ENCODE measurements at regions of chr18 and their contacts with region 1.

Region 1: DNA sequence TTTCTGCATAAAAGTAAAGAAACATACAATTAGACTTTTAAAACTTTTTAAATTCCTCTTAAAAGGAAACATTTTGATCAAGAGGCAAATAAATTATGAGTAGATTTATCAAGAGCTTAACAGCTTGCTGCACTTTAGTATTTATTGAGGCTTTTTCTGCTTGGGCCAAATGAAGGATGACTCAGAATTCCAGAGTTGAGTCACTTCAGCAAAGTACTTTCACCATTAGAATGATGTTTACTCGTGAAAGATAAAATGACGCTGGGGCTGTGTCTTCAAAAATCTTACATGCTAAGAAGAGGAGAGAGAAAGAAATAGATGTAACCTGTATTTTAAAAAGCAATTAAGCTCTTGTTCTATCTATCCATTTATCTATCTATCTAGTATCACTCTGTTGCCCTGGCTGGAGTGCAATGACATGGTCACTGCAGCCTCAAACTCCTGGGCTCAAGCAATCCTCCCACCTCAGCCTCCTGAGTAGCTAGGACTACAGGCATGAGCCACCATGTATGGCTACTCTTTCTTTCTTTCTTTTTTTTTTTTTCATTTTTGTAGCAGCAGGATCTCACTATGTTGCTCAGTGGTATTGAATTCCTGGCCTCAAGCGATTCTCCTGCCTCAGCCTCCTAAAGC is 75.3 kb upstream of the RIOK3 start:
- DNase-seq: peak; percentile 90
- H3K4me3 ChIP-seq: no peak overlapping the region
- H3K27ac ChIP-seq: peak overlapping the region; percentile 78
- H3K4me1 ChIP-seq: peaks cover 36% of the 10 kb centered on the region
- H3K27me3 ChIP-seq: no peaks in the 10 kb centered on the region
- CTCF ChIP-seq: no peak
- POLR2A ChIP-seq: no peak

Region 2: GRCh38 chr18:23032030-23032582 is 345.7 kb before region 1 on chr18:
- CTCF ChIA-PET with region 1: interaction called, 35 read pairs
- POLR2A ChIA-PET with region 1: no interaction called
- dilution Hi-C with region 1: no loop called
- intact Hi-C with region 1: loop called (anchors 1 kb)
- DNase-seq: peak; percentile 45
- H3K4me3 ChIP-seq: no peak overlapping the region
- H3K27ac ChIP-seq: peak overlapping the region; percentile 20
- H3K4me1 ChIP-seq: peaks cover 10% of the 10 kb centered on the region
- H3K27me3 ChIP-seq: no peaks in the 10 kb centered on the region
- CTCF ChIP-seq: no peak
- POLR2A ChIP-seq: no peak

Region 3: GRCh38 chr18:23077493-23078256 is 300.1 kb before region 1 on chr18:
- CTCF ChIA-PET with region 1: interaction called, 19 read pairs
- POLR2A ChIA-PET with region 1: no interaction called
- dilution Hi-C with region 1: no loop called
- intact Hi-C with region 1: loop called (anchors 2 kb)
- DNase-seq: peak; percentile 24
- H3K4me3 ChIP-seq: no peak overlapping the region
- H3K27ac ChIP-seq: no peak overlapping the region
- H3K4me1 ChIP-seq: peaks cover 4% of the 10 kb centered on the region
- H3K27me3 ChIP-seq: peaks cover 0 to 2% of the 10 kb centered on the region in 2 experiments
- CTCF ChIP-seq: peak; percentile 20 to 28
- POLR2A ChIP-seq: no peak

Region 4: DNA sequence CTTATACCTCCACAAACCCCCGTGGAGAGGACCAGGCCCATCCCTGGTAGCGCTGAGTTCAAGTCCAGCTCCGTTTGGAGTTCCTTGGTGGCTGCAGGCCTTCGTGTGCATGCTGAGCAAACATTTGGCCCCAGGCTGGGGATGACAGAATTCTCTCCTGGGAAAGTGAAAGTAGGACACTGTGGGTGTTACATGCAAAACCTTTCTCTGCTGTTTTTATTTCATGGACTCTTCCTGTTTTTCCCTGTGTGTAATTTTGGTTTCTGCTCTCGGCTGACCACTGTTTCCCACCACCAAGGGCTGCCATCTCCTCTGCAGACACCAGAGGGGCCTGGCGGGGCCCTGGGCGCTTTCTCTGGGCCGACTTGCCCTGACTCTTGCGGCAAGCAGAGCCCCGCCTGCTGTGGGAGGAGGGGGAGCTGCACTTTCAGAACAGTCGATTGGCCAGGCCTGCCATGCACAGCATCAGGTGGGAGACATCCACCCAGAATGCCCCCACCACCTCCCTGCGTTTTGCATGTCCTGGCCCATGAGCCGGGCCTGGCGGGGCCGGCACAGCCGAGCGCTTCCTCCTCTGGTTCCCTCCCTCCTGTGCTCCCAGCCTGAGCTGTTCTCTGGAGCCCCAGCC is 140.1 kb before region 1 on chr18:
- CTCF ChIA-PET with region 1: interaction called, 25 read pairs
- POLR2A ChIA-PET with region 1: no interaction called
- dilution Hi-C with region 1: no loop called
- intact Hi-C with region 1: loop called (anchors 1 kb)
- DNase-seq: peak; percentile 84
- H3K4me3 ChIP-seq: no peak overlapping the region
- H3K27ac ChIP-seq: peak overlapping the region; percentile 83
- H3K4me1 ChIP-seq: peaks cover 21% of the 10 kb centered on the region
- H3K27me3 ChIP-seq: no peaks in the 10 kb centered on the region
- CTCF ChIP-seq: peak; percentile 51 to 66
- POLR2A ChIP-seq: no peak

Region 5: DNA sequence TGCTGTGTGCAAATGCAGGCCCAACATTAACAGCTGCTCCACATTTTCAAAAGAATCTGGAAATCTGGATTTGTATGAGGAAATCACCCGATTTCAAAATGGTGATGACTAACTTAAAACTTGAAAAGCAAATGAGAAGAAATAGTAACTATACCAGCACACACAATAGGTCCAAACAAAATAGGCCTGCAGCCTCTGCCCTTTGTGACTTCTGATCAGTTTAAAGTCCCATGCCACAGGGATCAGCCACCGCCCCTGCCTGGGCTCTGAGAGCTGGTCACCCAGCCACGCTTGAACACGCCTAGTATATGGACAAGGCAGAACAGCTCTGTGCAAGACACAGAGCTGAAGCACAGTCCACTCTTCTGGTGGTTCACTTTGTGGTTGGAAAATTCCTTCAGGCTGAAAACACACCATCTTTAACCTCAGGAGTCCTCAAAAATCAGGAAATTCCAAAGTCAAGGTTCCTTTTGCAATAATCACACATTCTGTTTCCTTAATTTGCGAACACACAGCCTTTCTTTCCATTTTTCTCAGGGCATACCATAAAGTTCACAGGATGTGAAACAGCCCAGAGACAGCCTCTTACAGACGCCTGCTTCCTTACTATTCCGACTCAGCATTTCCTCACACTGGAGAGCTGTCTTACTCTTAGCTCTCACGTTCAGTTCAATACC is 74.8 kb before region 1 on chr18:
- CTCF ChIA-PET with region 1: interaction called, 8 read pairs
- POLR2A ChIA-PET with region 1: no interaction called
- dilution Hi-C with region 1: no loop called
- intact Hi-C with region 1: loop called (anchors 1 kb)
- DNase-seq: peak; percentile 98
- H3K4me3 ChIP-seq: no peak overlapping the region
- H3K27ac ChIP-seq: peak overlapping the region; percentile 88
- H3K4me1 ChIP-seq: peaks cover 44% of the 10 kb centered on the region
- H3K27me3 ChIP-seq: no peaks in the 10 kb centered on the region
- CTCF ChIP-seq: no peak
- POLR2A ChIP-seq: peak; percentile 75

Region 6: DNA sequence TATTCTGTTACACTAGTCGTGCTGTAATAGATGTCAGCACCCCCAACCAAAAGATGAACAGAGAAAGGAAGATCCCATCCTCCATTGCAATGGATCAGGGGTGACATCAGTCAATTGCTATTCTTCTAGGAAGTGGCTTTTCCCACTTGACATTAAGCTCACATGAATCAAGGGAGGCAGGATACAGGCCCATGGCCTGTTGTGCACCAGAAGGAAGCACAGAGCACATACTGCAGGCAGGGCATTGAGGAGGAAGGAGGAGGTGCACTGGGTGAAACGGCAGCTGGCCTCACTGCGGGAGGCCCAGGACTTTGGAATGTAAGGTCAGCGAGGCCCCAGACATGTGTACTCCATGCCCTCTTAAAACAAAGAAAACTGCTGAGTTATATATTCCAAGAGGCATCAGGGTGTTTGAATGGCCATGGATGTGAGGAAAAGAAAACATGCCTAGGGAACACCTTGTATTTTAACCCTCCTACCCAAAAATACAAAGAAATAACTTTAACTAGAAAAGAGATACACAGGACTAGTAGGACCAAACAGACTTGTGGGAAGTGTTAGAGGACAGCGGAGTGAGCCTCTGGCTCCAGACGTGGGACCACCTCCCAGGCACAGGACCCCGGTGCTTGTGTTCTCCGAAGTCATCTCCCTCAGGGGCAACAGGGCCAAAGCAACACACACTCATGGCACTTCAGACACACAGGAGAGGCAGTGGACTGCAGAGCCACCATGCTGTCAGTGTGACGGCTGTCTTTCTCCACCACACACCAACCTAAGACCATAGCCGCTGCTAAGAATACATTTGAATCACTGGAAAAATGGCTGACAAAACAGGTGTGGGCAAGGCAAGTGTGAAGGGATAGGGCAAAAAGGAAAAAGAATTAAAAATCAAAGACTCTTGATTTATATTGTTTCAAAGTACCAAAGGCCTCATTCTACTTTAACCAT is 23.9 kb after region 1 on chr18:
- CTCF ChIA-PET with region 1: interaction called, 22 read pairs
- POLR2A ChIA-PET with region 1: interaction called, 7 read pairs
- dilution Hi-C with region 1: no loop called
- intact Hi-C with region 1: loop called (anchors 1 kb)
- DNase-seq: peak; percentile 97
- H3K4me3 ChIP-seq: no peak overlapping the region
- H3K27ac ChIP-seq: peak overlapping the region; percentile 92
- H3K4me1 ChIP-seq: peaks cover 22% of the 10 kb centered on the region
- H3K27me3 ChIP-seq: no peaks in the 10 kb centered on the region
- CTCF ChIP-seq: no peak
- POLR2A ChIP-seq: peak; percentile 80